Spleen (tissue), 13 donors: ENCODE measurements at regions of chr2 and their contacts with region 1.

Region 1: GRCh38 chr2:158903711-158904443 is 64.6 kb upstream of the TANC1 start:
- DNase-seq: no peak
- H3K4me3 ChIP-seq: no peak overlapping the region
- H3K27ac ChIP-seq: no peak overlapping the region
- H3K4me1 ChIP-seq: peaks cover 0 to 4% (median 0%) of the 10 kb centered on the region in 6 donors
- H3K27me3 ChIP-seq: no peaks in the 10 kb centered on the region
- CTCF ChIP-seq: no peak
- POLR2A ChIP-seq: no peak

Region 2: DNA sequence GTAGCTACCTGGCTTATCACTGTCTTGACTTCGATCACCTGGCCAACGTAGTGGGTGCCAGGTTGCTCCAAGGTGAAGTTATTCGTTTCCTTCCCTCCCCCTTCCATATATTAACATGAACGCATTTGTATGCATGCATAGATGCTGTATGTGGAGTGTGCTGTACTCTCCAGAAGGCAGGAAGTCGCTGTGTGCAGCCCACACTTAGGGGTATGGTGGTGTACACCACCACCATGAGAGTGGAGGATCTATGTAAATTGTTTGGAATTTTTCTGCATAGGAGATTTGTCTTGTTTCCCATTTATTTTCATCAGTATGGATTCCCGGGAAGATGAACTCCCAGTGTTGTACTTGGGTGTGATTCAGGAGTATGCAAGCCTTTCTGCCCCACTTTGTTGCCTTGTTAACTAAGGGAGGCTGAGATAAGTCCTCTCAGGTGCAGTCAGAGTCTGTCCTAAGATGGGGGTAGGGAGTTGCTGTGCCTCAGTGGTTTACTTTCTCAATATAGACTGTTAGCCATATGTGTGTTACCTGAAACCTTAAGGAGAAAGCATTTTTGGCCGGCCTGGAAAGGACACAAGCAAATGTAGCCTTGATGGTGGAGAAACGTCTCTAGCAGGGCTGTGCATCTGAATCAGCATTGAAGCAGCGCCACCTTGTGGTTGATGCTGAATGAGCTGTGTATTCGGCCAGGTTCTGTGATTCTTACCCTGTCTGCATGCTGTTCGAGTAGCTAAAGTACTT is 214.4 kb after region 1 on chr2:
- intact Hi-C with region 1: loop called (anchors 2 kb)
- DNase-seq: peak; percentile 90
- H3K4me3 ChIP-seq: no peak overlapping the region
- H3K27ac ChIP-seq: no peak overlapping the region
- H3K4me1 ChIP-seq: peaks cover 0 to 18% (median 9%) of the 10 kb centered on the region in 6 donors
- H3K27me3 ChIP-seq: no peaks in the 10 kb centered on the region
- CTCF ChIP-seq: peak; percentile 60 to 89 (median 83)
- POLR2A ChIP-seq: no peak